CD4-positive, alpha-beta memory T cell (primary cell): ENCODE measurements at regions of chr16 and their contacts with region 1.

Region 1: DNA sequence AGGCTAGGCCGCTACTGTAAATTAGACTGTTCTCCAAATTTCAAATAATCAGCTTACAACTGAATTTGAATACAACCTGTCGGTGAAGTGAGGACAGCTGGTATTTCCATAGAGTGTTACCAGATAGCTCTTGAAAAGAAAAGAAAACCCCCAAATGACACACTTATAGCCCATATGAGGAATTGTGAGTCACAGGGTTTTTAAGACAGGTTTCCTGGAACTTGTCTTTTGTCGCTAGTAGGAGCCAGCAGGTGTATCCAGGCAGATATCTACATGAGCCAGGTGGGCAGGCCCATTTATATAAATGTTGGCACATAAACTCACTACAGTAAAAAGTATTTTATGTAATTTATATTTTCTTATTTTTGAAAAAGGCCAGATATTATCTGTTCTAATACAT is 24.0 kb downstream of the TNRC6A start:
- DNase-seq: no peak
- H3K4me3 ChIP-seq: no peak overlapping the region
- H3K4me3 Mint-ChIP-seq: no peak overlapping the region
- H3K27ac ChIP-seq: no peak overlapping the region
- H3K27ac Mint-ChIP-seq: peak overlapping the region in 2 of 7 donors; percentile 0 to 62
- H3K4me1 ChIP-seq: peaks cover 58% of the 10 kb centered on the region
- H3K4me1 Mint-ChIP-seq: peaks cover 50 to 70% (median 60%) of the 10 kb centered on the region in 4 donors
- H3K27me3 ChIP-seq: no peaks in the 10 kb centered on the region
- H3K27me3 Mint-ChIP-seq: no peaks in the 10 kb centered on the region

Region 2: DNA sequence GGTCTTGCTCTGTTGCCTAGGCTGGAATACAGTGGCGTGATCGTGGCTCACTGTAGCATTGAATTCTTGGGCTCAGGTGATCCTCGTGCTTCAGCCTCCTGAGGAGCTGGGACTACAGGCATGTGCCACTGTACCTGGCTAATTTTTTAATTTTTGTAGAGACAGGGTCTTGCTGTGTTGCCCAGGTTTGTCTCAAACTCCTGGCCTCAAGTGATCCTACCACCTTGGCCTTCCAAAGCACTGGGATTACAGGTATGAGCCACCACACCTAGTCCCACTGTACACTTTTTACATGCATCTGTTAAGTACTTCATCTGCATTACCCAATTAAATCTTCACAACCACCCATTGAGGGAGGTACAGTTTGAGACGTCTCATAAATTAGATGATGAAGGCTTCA is 11.6 kb before region 1 on chr16:
- CTCF ChIA-PET with region 1: no interaction called
- POLR2A ChIA-PET with region 1: no interaction called
- intact Hi-C with region 1: loop called (anchors 2 kb)
- DNase-seq: no peak
- H3K4me3 ChIP-seq: no peak overlapping the region
- H3K4me3 Mint-ChIP-seq: peak overlapping the region in 3 of 8 donors; percentile 23 to 50 (median 23)
- H3K27ac ChIP-seq: no peak overlapping the region
- H3K27ac Mint-ChIP-seq: no peak overlapping the region
- H3K4me1 ChIP-seq: peaks cover 99% of the 10 kb centered on the region
- H3K4me1 Mint-ChIP-seq: peaks cover 71 to 98% (median 84%) of the 10 kb centered on the region in 4 donors
- H3K27me3 ChIP-seq: no peaks in the 10 kb centered on the region
- H3K27me3 Mint-ChIP-seq: no peaks in the 10 kb centered on the region